Astrocyte of the cerebellum (primary cell): ENCODE measurements at regions of chr15 and their contacts with region 1.

Region 1: DNA sequence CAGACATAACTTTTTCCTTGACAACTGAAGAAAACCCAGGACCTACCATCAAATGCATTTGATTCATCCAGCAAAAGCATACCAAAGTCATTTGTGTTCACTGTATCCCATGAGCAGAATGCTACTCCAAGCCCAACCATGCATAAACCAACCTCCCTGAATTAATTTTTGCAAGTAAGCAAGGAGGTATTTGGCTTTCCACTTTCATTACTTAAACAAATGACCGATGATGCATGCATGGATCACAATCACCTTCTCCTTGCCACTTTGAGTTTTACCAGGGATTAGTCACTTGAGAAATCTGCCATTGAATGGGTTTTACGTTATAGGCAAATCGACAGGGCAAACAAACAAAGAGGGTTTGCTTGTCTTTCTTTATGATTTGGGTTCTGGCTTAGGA is 214.8 kb downstream of the FMN1 start:
- DNase-seq: peak; percentile 82
- H3K4me3 ChIP-seq: no peak overlapping the region
- CTCF ChIP-seq: no peak

Region 2: GRCh38 chr15:32659340-32660155 is 320.2 kb before region 1 on chr15:
- in situ Hi-C with region 1: loop called (anchors 5 kb)
- DNase-seq: no peak
- H3K4me3 ChIP-seq: no peak overlapping the region
- CTCF ChIP-seq: peak; percentile 4

Region 3: GRCh38 chr15:32910839-32911238 is 68.9 kb before region 1 on chr15:
- in situ Hi-C with region 1: loop called (anchors 5 kb)
- DNase-seq: no peak
- H3K4me3 ChIP-seq: no peak overlapping the region
- CTCF ChIP-seq: no peak

Region 4: GRCh38 chr15:32923176-32923575 is 56.5 kb before region 1 on chr15:
- in situ Hi-C with region 1: no loop called
- DNase-seq: no peak
- H3K4me3 ChIP-seq: no peak overlapping the region
- CTCF ChIP-seq: no peak

Region 5: DNA sequence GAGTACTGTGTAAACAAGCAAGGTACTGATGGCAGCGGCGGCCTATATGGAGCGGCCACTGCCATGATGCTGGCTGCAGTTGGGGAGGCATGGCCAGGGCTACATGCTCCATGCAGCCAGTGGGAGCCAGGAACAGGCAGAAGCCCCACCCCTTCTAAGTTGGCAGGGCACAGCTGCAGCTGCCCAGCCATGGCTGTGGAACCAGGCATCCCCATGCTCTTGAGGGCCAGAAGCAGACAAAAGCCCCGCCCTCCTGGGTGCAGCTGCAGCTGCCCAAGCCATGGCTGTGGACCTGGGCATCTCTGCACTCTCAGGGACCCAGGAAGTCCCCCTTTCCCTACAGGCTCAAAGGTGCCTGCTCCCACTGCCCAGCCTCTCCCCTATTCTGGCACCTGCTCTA is 63.9 kb after region 1 on chr15:
- in situ Hi-C with region 1: no loop called
- DNase-seq: no peak
- H3K4me3 ChIP-seq: no peak overlapping the region
- CTCF ChIP-seq: no peak

Region 6: DNA sequence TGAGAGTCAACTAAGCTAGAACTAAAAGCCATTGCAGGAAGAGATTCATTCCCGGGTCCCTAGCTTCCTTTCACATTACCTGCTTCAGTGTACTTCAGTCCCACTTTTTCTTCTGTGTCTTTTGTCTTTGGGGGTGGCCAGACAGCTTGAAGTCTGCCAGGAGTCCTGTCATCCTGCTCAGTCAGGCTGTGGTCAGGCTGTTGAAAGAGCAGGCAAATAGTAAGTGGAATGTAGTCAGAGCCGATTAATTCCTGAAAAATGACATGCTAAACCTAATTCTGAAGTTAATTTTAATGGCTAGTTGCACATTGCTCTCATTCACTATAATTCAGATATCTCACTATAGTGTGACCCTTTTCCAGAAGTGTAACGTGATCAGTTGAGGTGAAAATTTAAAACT is 85.2 kb after region 1 on chr15:
- in situ Hi-C with region 1: loop called (anchors 5 kb)
- DNase-seq: peak; percentile 56
- H3K4me3 ChIP-seq: no peak overlapping the region
- CTCF ChIP-seq: no peak